Activated CD4-positive, alpha-beta memory T cell treated with anti-CD3 and anti-CD28 coated beads, Interleukin-2, amount 10 ng/mL, durations not matched to agents 7 days and 5 days (primary cell): ENCODE measurements at regions of chr6 and their contacts with region 1.

Region 1: GRCh38 chr6:159693128-159693893 is at the start of gene SOD2:
- DNase-seq: peak; percentile 85
- H3K4me3 Mint-ChIP-seq: peak within 1 kb of the TSS; percentile 97
- H3K27ac Mint-ChIP-seq: peak within 1 kb of the TSS; percentile 97
- H3K4me1 Mint-ChIP-seq: peaks cover 52% of the 10 kb centered on the region
- H3K27me3 Mint-ChIP-seq: no peaks in the 10 kb centered on the region
- total RNA-seq, gene SOD2: 76.5 to 84.8 TPM

Region 2: DNA sequence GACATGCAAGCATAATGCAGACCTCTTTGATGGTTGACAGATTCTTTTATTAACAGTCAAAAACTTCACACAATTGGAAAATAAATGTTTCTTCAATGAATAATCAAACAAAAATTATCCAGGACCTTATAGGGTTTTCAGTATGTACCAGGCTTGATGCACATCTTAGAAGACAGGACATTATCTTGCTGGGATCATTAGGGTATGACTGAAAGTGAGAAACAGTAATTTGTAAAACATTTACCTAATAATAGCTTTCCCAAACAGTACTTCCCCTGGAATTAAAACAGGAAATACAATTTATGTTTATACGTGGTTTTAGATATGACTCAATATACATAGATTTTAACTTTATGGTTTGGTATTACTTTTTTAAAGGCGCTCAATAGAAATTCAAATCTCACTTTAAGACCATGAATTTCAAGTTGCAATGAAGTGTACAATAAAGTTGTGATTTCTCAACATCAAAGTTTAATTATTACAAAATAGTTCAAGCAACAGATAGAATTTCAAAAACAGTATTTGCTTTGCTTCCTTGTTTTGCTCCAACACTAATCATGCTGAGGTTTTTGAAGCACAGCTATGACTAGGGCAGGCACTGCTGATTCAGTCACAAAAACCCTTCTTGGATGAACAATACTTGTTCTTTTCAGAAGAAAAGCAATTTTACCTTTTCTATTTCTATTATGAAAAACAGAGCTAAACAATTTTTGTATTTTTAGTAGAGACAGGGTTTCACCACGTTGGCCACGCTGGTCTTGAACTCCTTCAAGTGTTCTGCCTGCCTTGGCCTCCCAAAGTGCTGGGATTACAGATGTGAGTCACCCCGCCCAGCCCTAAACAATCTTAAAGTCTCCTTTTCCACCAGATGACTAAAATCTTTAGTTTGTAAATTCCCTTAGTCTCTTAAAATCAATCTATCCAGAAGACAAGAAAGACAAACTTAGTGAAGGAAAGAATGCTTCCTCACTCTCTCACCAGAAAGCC is 13.9 kb before region 1 on chr6:
- CTCF ChIA-PET with region 1: interaction called, 13 read pairs
- POLR2A ChIA-PET with region 1: interaction called, 14 read pairs
- DNase-seq: no peak
- H3K4me3 Mint-ChIP-seq: no peak overlapping the region
- H3K27ac Mint-ChIP-seq: peak overlapping the region; percentile 5
- H3K4me1 Mint-ChIP-seq: peaks cover 37% of the 10 kb centered on the region
- H3K27me3 Mint-ChIP-seq: no peaks in the 10 kb centered on the region

Region 3: GRCh38 chr6:159761873-159762680 is 68.8 kb after region 1 on chr6 and contains the start of gene ACAT2:
- CTCF ChIA-PET with region 1: interaction called, 4 read pairs
- POLR2A ChIA-PET with region 1: interaction called, 17 read pairs
- DNase-seq: peak; percentile 95
- H3K4me3 Mint-ChIP-seq: peak within 1 kb of the TSS; percentile 84
- H3K27ac Mint-ChIP-seq: peak within 1 kb of the TSS; percentile 96
- H3K4me1 Mint-ChIP-seq: peaks cover 44% of the 10 kb centered on the region
- H3K27me3 Mint-ChIP-seq: no peaks in the 10 kb centered on the region
- total RNA-seq, gene ACAT2: 98.0 to 109 TPM